ENCODE measurements at regions of chr11 and their contacts with region 1.

Region 1: DNA sequence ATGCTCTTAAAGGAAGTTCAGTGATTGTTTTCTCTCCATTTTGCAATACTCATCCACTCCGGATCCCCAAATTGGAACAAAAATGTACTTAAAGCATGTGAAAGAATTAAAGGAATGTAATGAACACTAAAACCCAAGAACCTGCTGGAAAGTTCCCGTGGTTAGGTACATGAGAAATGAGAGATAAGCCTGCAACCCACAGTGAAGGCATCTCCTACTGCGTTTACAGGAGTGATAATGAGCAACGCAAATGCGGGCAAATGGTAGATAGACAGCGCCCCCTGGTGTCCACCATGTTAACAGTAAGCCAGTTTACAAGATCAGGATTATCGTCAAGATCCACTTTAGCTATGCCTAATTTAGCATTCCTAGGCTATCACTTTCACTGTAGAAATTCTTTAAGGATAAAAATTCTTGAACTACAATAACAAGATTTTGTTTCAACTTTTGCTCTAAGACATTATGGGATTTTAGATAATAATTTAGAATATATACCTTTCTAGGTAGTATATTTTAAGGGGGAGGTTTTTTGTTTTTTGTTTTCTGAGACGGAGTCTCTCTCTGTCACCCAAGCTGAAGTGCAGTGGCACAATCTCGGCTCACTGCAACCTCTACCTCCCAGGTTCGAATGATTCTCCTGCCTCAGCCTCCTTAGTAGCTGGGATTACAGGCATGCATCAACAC is 29.9 kb downstream of the ALG9 start:
- DNase-seq: peak; percentile 65 to 92 (median 78)
- ATAC-seq: peak; percentile 80 to 98 (median 96)
- H3K4me3 ChIP-seq: no peak overlapping the region
- H3K27ac ChIP-seq: peak overlapping the region in 1 of 4 donors; percentile 8
- H3K4me1 ChIP-seq: no peaks in the 10 kb centered on the region
- H3K27me3 ChIP-seq: no peaks in the 10 kb centered on the region
- CTCF ChIP-seq: peak; percentile 74 to 87 (median 82)

Region 2: DNA sequence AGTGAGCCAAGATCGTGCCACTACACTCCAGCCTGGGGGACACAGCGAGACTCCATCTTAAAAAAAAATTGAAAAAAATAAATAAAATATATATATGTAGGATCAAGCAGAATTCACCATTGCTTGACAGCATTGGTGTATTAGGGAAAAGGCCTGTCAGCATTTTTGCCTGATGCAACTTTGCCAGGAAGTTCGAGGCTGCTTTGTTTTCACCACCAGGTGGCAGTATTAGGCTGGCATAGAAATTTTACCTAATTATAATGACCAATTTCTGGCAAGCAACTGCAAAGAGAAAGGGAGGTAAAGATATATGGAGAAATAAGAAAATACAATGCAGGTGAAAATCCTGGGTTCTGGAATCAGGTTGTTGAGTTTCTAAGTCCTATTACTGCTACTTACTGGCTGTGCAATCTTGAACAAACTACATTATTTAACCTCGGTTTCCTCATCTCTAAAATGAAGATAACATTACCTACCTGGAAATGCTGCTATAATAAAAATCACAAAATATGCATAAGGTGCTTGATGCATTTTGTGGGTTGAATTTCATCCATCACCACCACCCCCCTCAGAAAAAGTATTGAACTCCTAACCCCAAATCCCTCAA is 276.3 kb before region 1 on chr11:
- intact Hi-C with region 1: loop called in 1 of 3 experiments (anchors 10 kb)
- DNase-seq: peak in 4 of 6 donors; percentile 43 to 76 (median 52)
- ATAC-seq: peak; percentile 62 to 82 (median 82)
- H3K4me3 ChIP-seq: no peak overlapping the region
- H3K27ac ChIP-seq: no peak overlapping the region
- H3K4me1 ChIP-seq: peaks cover 0 to 3% (median 0%) of the 10 kb centered on the region in 3 donors
- H3K27me3 ChIP-seq: no peaks in the 10 kb centered on the region
- CTCF ChIP-seq: peak; percentile 83 to 89 (median 88)

Region 3: GRCh38 chr11:111591187-111591960 is 250.1 kb before region 1 on chr11:
- intact Hi-C with region 1: loop called (anchors 5 to 10 kb)
- DNase-seq: no peak
- ATAC-seq: no peak
- H3K4me3 ChIP-seq: no peak overlapping the region
- H3K27ac ChIP-seq: no peak overlapping the region
- H3K4me1 ChIP-seq: peaks cover 0 to 4% (median 0%) of the 10 kb centered on the region in 3 donors
- H3K27me3 ChIP-seq: no peaks in the 10 kb centered on the region
- CTCF ChIP-seq: no peak

Region 4: GRCh38 chr11:111601979-111602864 is 239.3 kb before region 1 on chr11 and contains the start of gene SIK2:
- intact Hi-C with region 1: loop called in 2 of 3 experiments (anchors 10 kb)
- DNase-seq: peak; percentile 95 to 98 (median 96)
- ATAC-seq: peak; percentile 88 to 93 (median 91)
- H3K4me3 ChIP-seq: peak within 1 kb of the TSS; percentile 83 to 95 (median 86)
- H3K27ac ChIP-seq: peak within 1 kb of the TSS; percentile 94 to 98 (median 96)
- H3K4me1 ChIP-seq: peaks cover 1 to 31% (median 21%) of the 10 kb centered on the region in 3 donors
- H3K27me3 ChIP-seq: no peaks in the 10 kb centered on the region
- CTCF ChIP-seq: peak; percentile 50 to 93 (median 90)
- total RNA-seq, gene SIK2: 10.7 to 24.7 (median 18.3) TPM

Region 5: GRCh38 chr11:111766093-111766833 is 75.2 kb before region 1 on chr11 and contains the start of gene PPP2R1B:
- intact Hi-C with region 1: no loop called
- DNase-seq: peak; percentile 66 to 90 (median 80)
- ATAC-seq: peak; percentile 93 to 97 (median 94)
- H3K4me3 ChIP-seq: peak within 1 kb of the TSS; percentile 79 to 95 (median 90)
- H3K27ac ChIP-seq: peak within 1 kb of the TSS; percentile 66 to 88 (median 87)
- H3K4me1 ChIP-seq: peaks cover 8 to 39% (median 10%) of the 10 kb centered on the region in 3 donors
- H3K27me3 ChIP-seq: no peaks in the 10 kb centered on the region
- CTCF ChIP-seq: no peak
- total RNA-seq, gene PPP2R1B: 23.2 to 50.1 (median 34.5) TPM